ENCODE measurements at regions of chr6 and their contacts with region 1.

Region 1: DNA sequence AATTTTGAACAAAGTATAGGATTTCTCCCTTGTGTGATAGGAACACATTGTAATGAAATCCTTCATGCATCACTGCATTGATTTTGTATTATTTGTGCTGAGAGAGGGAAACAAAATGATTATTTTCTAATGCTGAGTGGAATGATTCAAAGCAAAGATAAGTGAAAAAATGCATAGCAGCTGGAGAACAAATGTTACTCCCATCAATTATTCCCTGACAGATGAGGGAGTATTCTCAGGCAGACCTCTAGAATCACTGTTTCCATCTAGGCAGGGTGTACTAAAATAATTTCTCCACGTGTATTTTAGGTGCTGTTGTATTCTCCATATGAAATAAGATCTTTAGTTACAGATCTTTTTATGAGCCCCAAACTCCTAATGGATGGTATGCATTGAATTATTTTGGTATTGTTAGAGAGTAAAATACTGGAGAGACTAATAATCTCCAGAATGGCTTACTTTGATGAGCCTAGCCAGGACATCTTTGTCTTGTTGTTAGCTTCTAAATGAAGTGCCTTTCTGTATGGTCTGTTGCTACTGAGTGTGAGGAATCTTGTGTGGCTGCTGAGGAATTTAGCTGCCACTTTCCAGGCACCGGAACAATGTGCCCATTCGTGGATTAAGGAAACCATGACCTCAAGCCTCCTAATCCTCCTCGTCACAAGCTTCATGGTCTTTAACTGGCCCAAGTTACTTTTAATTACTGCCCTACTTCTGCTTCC is 39.6 kb downstream of the RNF217 start:
- DNase-seq: no peak
- H3K4me3 ChIP-seq: peak overlapping the region; percentile 52 to 55
- H3K27ac ChIP-seq: peak overlapping the region; percentile 40 to 69
- H3K4me1 ChIP-seq: peaks cover 0 to 18% of the 10 kb centered on the region in 2 donors
- H3K27me3 ChIP-seq: no peaks in the 10 kb centered on the region
- CTCF ChIP-seq: no peak

Region 2: GRCh38 chr6:125013938-125014660 is 12.3 kb after region 1 on chr6:
- intact Hi-C with region 1: no loop called
- DNase-seq: no peak
- H3K4me3 ChIP-seq: no peak overlapping the region
- H3K27ac ChIP-seq: no peak overlapping the region
- H3K4me1 ChIP-seq: peaks cover 0 to 8% of the 10 kb centered on the region in 2 donors
- H3K27me3 ChIP-seq: no peaks in the 10 kb centered on the region
- CTCF ChIP-seq: no peak

Region 3: DNA sequence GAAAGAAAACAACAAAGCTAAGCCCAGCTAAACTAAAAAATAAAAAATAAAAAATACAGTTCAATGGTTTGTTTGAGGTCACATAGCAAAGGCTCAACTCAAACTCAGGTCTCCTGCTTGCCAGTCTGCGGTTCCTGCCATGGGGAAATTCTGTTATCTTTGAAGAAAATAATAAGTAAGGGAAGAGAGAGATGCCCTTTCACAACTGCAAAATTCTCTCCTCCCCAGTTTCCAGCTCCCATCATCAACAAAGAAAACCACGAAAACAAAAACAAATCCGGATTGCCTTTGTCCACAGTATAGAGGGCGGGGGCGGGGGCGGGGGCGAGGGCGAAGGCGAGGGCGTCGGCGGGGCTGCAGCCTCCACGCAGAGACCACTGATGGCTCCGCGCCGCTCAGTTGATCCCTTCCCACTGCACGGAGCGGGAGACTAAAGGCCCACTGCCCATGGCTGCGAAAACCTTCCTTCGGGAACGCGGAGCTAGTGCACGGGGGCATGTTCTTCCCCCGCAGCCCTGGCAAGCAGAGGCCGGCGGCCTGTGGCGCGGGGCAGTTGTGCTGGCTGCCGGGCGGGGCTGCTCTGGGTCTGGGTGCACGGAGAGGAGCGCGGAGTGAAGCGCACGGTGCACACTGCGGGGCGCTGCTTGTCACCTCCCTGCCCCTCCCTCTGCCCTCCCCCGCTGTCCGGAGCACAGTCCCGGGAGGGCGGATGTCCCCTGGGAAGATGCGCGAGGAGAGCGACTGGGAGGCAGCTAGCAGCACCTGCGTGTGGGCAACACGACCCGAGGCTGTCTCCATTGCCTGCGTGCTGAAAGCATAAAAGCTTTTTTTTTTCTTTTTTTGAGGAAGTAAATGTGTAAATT is 97.6 kb after region 1 on chr6:
- intact Hi-C with region 1: loop called (anchors 5 kb)
- DNase-seq: peak in 1 of 2 donors; percentile 76
- H3K4me3 ChIP-seq: peak overlapping the region; percentile 69 to 71
- H3K27ac ChIP-seq: peak overlapping the region; percentile 77 to 91
- H3K4me1 ChIP-seq: peaks cover 7 to 39% of the 10 kb centered on the region in 2 donors
- H3K27me3 ChIP-seq: no peaks in the 10 kb centered on the region
- CTCF ChIP-seq: peak in 1 of 3 experiments; percentile 16

Measured in ascending aorta (tissue), 2 donors.